CD4-positive, alpha-beta T cell (primary cell): ENCODE measurements at regions of chr3 and their contacts with region 1.

Region 1: DNA sequence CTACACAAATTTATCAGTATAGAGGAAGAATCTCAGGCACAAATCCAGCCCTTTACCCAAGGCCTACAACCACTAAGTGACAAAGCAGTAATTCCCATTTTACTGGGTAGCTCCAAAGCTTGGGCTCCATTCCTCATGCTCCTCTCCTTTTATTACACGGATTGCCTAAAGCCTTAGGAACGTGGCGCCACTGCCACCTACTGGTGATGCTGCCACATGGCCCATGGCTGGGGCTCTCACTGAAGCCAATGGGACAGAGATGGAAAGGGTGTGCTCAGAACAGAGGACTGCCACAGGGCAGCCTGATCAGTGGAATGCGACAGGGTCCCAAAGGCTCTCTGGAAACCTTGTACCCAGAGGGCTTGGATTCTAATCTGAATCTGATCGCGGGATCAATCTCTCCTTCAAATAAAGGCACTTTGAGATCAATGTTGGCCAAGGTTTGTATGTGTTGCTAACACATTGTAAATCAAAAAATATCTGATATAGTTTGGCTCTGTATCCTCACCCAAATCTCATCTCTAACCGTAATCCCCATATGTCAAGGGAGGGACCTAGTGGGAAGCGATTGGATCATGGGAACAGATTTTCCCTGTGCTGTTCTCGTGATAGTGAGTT is 33.5 kb upstream of the LYZL4 start:
- DNase-seq: peak; percentile 67 to 85 (median 76)
- ATAC-seq: peak; percentile 80
- H3K4me3 ChIP-seq: no peak overlapping the region
- H3K4me3 Mint-ChIP-seq: no peak overlapping the region
- H3K27ac ChIP-seq: no peak overlapping the region
- H3K27ac Mint-ChIP-seq: no peak overlapping the region
- H3K4me1 ChIP-seq: no peaks in the 10 kb centered on the region
- H3K4me1 Mint-ChIP-seq: no peaks in the 10 kb centered on the region
- H3K27me3 ChIP-seq: peaks cover 0 to 6% of the 10 kb centered on the region in 2 experiments
- H3K27me3 Mint-ChIP-seq: no peaks in the 10 kb centered on the region
- CTCF ChIP-seq: peak; percentile 97

Region 2: DNA sequence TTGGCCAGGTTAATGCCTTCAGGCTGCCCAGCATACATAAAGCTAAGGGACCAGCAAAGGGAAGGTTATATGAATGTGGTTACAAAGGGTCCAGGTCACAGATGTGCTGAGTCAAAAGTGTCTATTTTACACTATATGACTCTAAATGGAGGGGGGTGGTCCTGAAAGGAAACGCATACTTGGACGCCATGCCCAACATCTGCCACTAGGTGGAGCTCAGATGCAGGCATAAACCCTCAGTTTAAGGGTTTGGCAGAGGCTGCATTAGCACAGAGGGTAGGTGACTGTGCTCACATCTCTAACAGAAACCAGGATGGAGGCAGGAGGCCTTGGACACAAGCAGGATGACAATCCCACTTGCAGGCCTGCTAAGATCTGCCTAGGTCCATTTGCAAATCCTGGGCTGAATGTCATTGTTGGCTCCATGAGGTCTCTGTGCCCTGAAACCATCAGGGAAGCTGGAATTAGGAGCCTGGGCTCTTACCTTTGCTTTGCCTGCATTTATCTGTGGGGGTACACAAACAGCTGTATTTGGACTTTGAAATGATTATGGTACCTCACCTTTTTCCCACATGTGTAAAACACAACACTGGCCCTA is 1863.3 kb before region 1 on chr3:
- CTCF ChIA-PET with region 1: no interaction called
- POLR2A ChIA-PET with region 1: no interaction called
- intact Hi-C with region 1: loop called (anchors 5 to 10 kb)
- DNase-seq: peak; percentile 38 to 75 (median 49)
- ATAC-seq: peak; percentile 76
- H3K4me3 ChIP-seq: no peak overlapping the region
- H3K4me3 Mint-ChIP-seq: no peak overlapping the region
- H3K27ac ChIP-seq: no peak overlapping the region
- H3K27ac Mint-ChIP-seq: no peak overlapping the region
- H3K4me1 ChIP-seq: peaks cover 3% of the 10 kb centered on the region
- H3K4me1 Mint-ChIP-seq: no peaks in the 10 kb centered on the region
- H3K27me3 ChIP-seq: peaks cover 0 to 2% of the 10 kb centered on the region in 2 experiments
- H3K27me3 Mint-ChIP-seq: peaks cover 8% of the 10 kb centered on the region
- CTCF ChIP-seq: peak; percentile 89

Region 3: GRCh38 chr3:41893977-41894376 is 550.0 kb before region 1 on chr3:
- CTCF ChIA-PET with region 1: no interaction called
- POLR2A ChIA-PET with region 1: no interaction called
- intact Hi-C with region 1: loop called (anchors 2 to 5 kb)
- DNase-seq: peak in 4 of 14 experiments; percentile 30 to 59 (median 51)
- ATAC-seq: no peak
- H3K4me3 ChIP-seq: no peak overlapping the region
- H3K4me3 Mint-ChIP-seq: no peak overlapping the region
- H3K27ac ChIP-seq: no peak overlapping the region
- H3K27ac Mint-ChIP-seq: no peak overlapping the region
- H3K4me1 ChIP-seq: no peaks in the 10 kb centered on the region
- H3K4me1 Mint-ChIP-seq: no peaks in the 10 kb centered on the region
- H3K27me3 ChIP-seq: no peaks in the 10 kb centered on the region
- H3K27me3 Mint-ChIP-seq: no peaks in the 10 kb centered on the region
- CTCF ChIP-seq: peak; percentile 74

Region 4: GRCh38 chr3:42118762-42119361 is 325.1 kb before region 1 on chr3:
- CTCF ChIA-PET with region 1: no interaction called
- POLR2A ChIA-PET with region 1: no interaction called
- intact Hi-C with region 1: loop called (anchors 5 kb)
- DNase-seq: peak in 4 of 14 experiments; percentile 15 to 32 (median 18)
- ATAC-seq: no peak
- H3K4me3 ChIP-seq: no peak overlapping the region
- H3K4me3 Mint-ChIP-seq: no peak overlapping the region
- H3K27ac ChIP-seq: no peak overlapping the region
- H3K27ac Mint-ChIP-seq: no peak overlapping the region
- H3K4me1 ChIP-seq: no peaks in the 10 kb centered on the region
- H3K4me1 Mint-ChIP-seq: peaks cover 18% of the 10 kb centered on the region
- H3K27me3 ChIP-seq: no peaks in the 10 kb centered on the region
- H3K27me3 Mint-ChIP-seq: no peaks in the 10 kb centered on the region
- CTCF ChIP-seq: no peak

Region 5: GRCh38 chr3:42247576-42248027 is 196.3 kb before region 1 on chr3:
- CTCF ChIA-PET with region 1: interaction called, 8 read pairs
- POLR2A ChIA-PET with region 1: interaction called, 13 read pairs
- intact Hi-C with region 1: loop called (anchors 1 kb)
- DNase-seq: peak; percentile 49 to 79 (median 58)
- ATAC-seq: peak; percentile 79
- H3K4me3 ChIP-seq: no peak overlapping the region
- H3K4me3 Mint-ChIP-seq: peak overlapping the region; percentile 0
- H3K27ac ChIP-seq: no peak overlapping the region
- H3K27ac Mint-ChIP-seq: no peak overlapping the region
- H3K4me1 ChIP-seq: peaks cover 9% of the 10 kb centered on the region
- H3K4me1 Mint-ChIP-seq: peaks cover 8% of the 10 kb centered on the region
- H3K27me3 ChIP-seq: peaks cover 2 to 7% of the 10 kb centered on the region in 2 experiments
- H3K27me3 Mint-ChIP-seq: peaks cover 12% of the 10 kb centered on the region
- CTCF ChIP-seq: peak; percentile 80

Region 6: DNA sequence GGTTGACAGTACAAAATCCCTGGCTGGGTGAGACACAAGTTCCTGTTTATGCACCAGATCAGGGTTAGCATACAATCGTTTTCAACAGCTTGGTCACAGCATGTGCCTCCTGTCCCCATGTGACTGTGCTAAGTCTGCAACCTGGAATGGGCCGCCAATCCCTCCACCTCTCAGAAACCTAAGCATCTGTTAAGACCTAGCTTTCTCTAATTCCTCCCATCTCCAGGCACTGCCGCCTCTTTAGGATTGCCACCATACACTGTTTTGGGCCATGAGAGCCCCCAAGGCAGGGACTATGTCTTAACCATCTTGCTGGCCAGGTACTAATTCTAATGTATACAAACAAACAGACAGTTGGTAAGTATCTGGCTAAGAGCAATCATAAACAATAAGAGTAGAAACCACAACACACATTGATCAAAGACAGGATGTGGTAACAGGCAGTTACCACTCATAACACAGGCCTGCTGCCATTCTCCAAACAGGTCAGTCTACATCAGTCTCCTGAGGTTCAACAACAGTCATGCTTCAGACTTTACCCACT is 112.2 kb after region 1 on chr3:
- CTCF ChIA-PET with region 1: no interaction called
- POLR2A ChIA-PET with region 1: no interaction called
- intact Hi-C with region 1: loop called (anchors 1 to 2 kb)
- DNase-seq: peak; percentile 31 to 87 (median 46)
- ATAC-seq: peak; percentile 86
- H3K4me3 ChIP-seq: no peak overlapping the region
- H3K4me3 Mint-ChIP-seq: peak overlapping the region; percentile 54
- H3K27ac ChIP-seq: peak overlapping the region; percentile 58 to 73
- H3K27ac Mint-ChIP-seq: peak overlapping the region; percentile 92
- H3K4me1 ChIP-seq: peaks cover 41% of the 10 kb centered on the region
- H3K4me1 Mint-ChIP-seq: peaks cover 47% of the 10 kb centered on the region
- H3K27me3 ChIP-seq: no peaks in the 10 kb centered on the region
- H3K27me3 Mint-ChIP-seq: no peaks in the 10 kb centered on the region
- CTCF ChIP-seq: no peak